Activated naive CD4-positive, alpha-beta T cell treated with anti-CD3 and anti-CD28 coated beads, Interleukin-2, amount 10 ng/mL, durations not matched to agents 7 days and 5 days (primary cell): ENCODE measurements at regions of chr17 and their contacts with region 1.

Region 1: GRCh38 chr17:74368092-74369081 is 1.1 kb downstream of the GPR142 start:
- DNase-seq: peak; percentile 79
- H3K4me3 Mint-ChIP-seq: no peak overlapping the region
- H3K27ac Mint-ChIP-seq: no peak overlapping the region
- H3K4me1 Mint-ChIP-seq: peaks cover 15% of the 10 kb centered on the region
- H3K27me3 Mint-ChIP-seq: peaks cover 45% of the 10 kb centered on the region

Region 2: GRCh38 chr17:74305865-74306654 is 62.3 kb before region 1 on chr17:
- CTCF ChIA-PET with region 1: interaction called, 27 read pairs
- DNase-seq: no peak
- H3K4me3 Mint-ChIP-seq: no peak overlapping the region
- H3K27ac Mint-ChIP-seq: no peak overlapping the region
- H3K4me1 Mint-ChIP-seq: peaks cover 23% of the 10 kb centered on the region
- H3K27me3 Mint-ChIP-seq: peaks cover 47% of the 10 kb centered on the region

Region 3: GRCh38 chr17:74379495-74380085 is 11.2 kb after region 1 on chr17:
- CTCF ChIA-PET with region 1: interaction called, 59 read pairs
- DNase-seq: peak; percentile 95
- H3K4me3 Mint-ChIP-seq: no peak overlapping the region
- H3K27ac Mint-ChIP-seq: no peak overlapping the region
- H3K4me1 Mint-ChIP-seq: peaks cover 13% of the 10 kb centered on the region
- H3K27me3 Mint-ChIP-seq: peaks cover 57% of the 10 kb centered on the region

Region 4: GRCh38 chr17:74493381-74493833 is 125.0 kb after region 1 on chr17:
- CTCF ChIA-PET with region 1: interaction called, 11 read pairs
- DNase-seq: peak; percentile 80
- H3K4me3 Mint-ChIP-seq: no peak overlapping the region
- H3K27ac Mint-ChIP-seq: no peak overlapping the region
- H3K4me1 Mint-ChIP-seq: peaks cover 8% of the 10 kb centered on the region
- H3K27me3 Mint-ChIP-seq: peaks cover 52% of the 10 kb centered on the region

Region 5: GRCh38 chr17:75059369-75060345 is 691.3 kb after region 1 on chr17:
- CTCF ChIA-PET with region 1: no interaction called
- DNase-seq: no peak
- H3K4me3 Mint-ChIP-seq: no peak overlapping the region
- H3K27ac Mint-ChIP-seq: peak overlapping the region; percentile 66
- H3K4me1 Mint-ChIP-seq: peaks cover 32% of the 10 kb centered on the region
- H3K27me3 Mint-ChIP-seq: no peaks in the 10 kb centered on the region